Lower leg skin (tissue), 4 donors: ENCODE measurements at regions of chr1 and their contacts with region 1.

Region 1: GRCh38 chr1:112099979-112100378 is 110.5 kb upstream of the KCND3 start:
- DNase-seq: no peak
- H3K4me3 ChIP-seq: no peak overlapping the region
- CTCF ChIP-seq: no peak
- POLR2A ChIP-seq: no peak

Region 2: DNA sequence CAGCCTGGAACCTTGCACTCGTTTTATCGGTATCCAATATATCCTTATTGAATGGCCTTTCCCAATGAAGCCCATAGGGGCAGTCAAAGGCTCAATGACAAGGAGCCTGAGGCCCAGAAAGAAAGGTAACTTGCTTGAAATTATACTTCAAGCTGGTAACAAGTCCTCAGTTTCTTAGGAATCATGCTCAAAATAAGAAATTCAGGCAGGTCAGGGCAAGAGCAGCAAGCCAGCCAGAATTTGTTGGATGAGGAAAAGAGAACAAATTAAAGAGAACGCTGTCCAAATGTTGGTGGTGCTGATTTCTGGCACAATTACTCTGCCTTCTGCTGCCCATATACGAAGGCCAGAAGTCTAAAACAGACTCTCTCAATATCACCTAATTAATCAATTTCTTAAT is 266.6 kb before region 1 on chr1:
- intact Hi-C with region 1: loop called (anchors 5 kb)
- DNase-seq: no peak
- H3K4me3 ChIP-seq: no peak overlapping the region
- CTCF ChIP-seq: no peak
- POLR2A ChIP-seq: no peak